CD4-positive, alpha-beta T cell (primary cell): ENCODE measurements at regions of chr19 and their contacts with region 1.

Region 1: GRCh38 chr19:51703575-51704515 is 10.7 kb downstream of the SPACA6 start:
- DNase-seq: peak; percentile 93 to 99 (median 97)
- ATAC-seq: peak; percentile 89
- H3K4me3 ChIP-seq: peak overlapping the region; percentile 91
- H3K4me3 Mint-ChIP-seq: peak overlapping the region; percentile 93
- H3K27ac ChIP-seq: peak overlapping the region; percentile 66 to 82
- H3K27ac Mint-ChIP-seq: peak overlapping the region; percentile 84
- H3K4me1 ChIP-seq: peaks cover 34% of the 10 kb centered on the region
- H3K4me1 Mint-ChIP-seq: peaks cover 46% of the 10 kb centered on the region
- H3K27me3 ChIP-seq: no peaks in the 10 kb centered on the region
- H3K27me3 Mint-ChIP-seq: no peaks in the 10 kb centered on the region
- CTCF ChIP-seq: peak; percentile 55

Region 2: DNA sequence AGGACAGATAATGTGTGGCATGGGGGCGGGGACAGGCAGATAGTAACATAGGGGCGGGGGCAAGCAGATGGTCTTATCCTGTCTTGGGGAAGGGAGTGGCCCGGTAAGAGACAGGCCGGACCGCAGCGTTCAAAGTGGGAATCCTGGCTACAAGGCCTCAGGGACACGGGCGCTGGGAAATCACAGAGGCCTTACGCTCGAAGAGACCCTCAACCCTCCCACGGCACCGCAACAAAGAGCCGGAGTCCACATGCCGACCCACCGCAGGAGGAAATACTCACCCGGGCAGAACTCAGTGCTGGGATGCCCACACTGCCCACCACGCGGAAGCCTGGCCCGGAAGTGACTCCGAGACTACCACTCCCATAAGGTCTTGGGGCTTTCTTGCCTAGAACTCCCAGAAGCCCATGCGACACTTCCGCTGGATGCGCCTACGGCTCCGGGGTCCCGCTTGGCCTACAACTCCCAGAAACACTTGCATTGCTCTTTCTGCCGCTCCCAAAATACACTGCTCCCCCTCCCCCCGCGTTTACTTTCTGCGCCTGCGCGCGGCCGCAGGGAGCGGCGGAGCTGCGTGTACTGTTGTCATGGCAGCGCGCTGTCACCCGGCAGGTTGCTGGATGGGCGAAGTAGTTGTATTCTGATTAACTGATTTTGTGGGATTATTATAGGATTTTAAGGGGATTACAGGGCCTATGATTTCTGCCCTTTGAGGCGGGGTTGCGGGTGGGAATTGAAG is 595.6 kb before region 1 on chr19 and contains the start of gene CTU1:
- CTCF ChIA-PET with region 1: no interaction called
- POLR2A ChIA-PET with region 1: no interaction called
- intact Hi-C with region 1: loop called in 1 of 2 experiments (anchors 10 kb)
- DNase-seq: peak; percentile 96 to 100 (median 98)
- ATAC-seq: peak; percentile 98
- H3K4me3 ChIP-seq: peak within 1 kb of the TSS; percentile 83
- H3K4me3 Mint-ChIP-seq: peak within 1 kb of the TSS; percentile 95
- H3K27ac ChIP-seq: peak within 1 kb of the TSS; percentile 60 to 63
- H3K27ac Mint-ChIP-seq: peak within 1 kb of the TSS; percentile 91
- H3K4me1 ChIP-seq: peaks cover 29% of the 10 kb centered on the region
- H3K4me1 Mint-ChIP-seq: peaks cover 38% of the 10 kb centered on the region
- H3K27me3 ChIP-seq: no peaks in the 10 kb centered on the region
- H3K27me3 Mint-ChIP-seq: no peaks in the 10 kb centered on the region
- CTCF ChIP-seq: no peak
- total RNA-seq, gene CTU1: 1.4 to 1.6 TPM

Region 3: GRCh38 chr19:51570962-51571575 is 132.8 kb before region 1 on chr19 and contains the start of gene ZNF175:
- CTCF ChIA-PET with region 1: interaction called, 3 read pairs
- POLR2A ChIA-PET with region 1: interaction called, 3 read pairs
- intact Hi-C with region 1: loop called in 1 of 2 experiments (anchors 5 kb)
- DNase-seq: peak; percentile 77 to 94 (median 83)
- ATAC-seq: peak; percentile 98
- H3K4me3 ChIP-seq: peak within 1 kb of the TSS; percentile 76
- H3K4me3 Mint-ChIP-seq: peak within 1 kb of the TSS; percentile 94
- H3K27ac ChIP-seq: no peak within 1 kb of the TSS
- H3K27ac Mint-ChIP-seq: peak within 1 kb of the TSS; percentile 72
- H3K4me1 ChIP-seq: peaks cover 16% of the 10 kb centered on the region
- H3K4me1 Mint-ChIP-seq: peaks cover 28% of the 10 kb centered on the region
- H3K27me3 ChIP-seq: peaks cover 0 to 2% of the 10 kb centered on the region in 2 experiments
- H3K27me3 Mint-ChIP-seq: peaks cover 7% of the 10 kb centered on the region
- CTCF ChIP-seq: no peak
- total RNA-seq, gene ZNF175: 1.1 to 1.9 TPM

Region 4: DNA sequence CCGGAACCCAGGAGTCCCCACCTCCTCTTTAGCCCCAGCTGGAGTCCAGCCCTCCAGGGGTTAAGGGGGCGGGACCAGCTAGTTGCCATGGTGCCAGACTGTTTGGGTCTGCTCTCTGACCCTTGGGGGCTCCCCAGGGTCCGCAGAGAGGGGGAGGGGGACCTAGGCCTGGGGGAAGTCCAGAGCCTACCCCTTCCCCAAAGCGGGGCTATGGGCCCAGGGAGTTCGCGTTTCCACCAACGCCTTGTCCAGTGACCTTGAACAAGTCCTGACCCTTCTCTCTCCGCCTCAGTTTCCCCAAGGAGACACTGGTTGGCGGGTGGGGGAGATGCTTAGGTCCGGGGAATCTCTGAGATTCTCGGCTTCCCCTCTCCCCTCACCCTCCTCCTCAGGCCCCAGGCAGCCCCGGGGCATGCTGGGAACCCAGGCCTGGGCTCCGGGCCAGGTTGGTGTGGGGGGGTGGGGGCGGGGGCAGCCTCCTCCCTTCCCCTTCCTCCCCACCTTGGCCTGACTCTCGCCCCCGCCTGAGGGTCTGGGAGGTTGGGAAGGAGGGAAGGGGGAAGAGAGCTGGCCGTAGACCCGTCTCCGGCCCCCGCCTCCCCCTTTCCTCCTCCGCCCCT is 13.3 kb before region 1 on chr19:
- CTCF ChIA-PET with region 1: interaction called, 4 read pairs
- POLR2A ChIA-PET with region 1: interaction called, 13 read pairs
- intact Hi-C with region 1: loop called in 1 of 2 experiments (anchors 1 kb)
- DNase-seq: peak; percentile 44 to 93 (median 66)
- ATAC-seq: peak; percentile 82
- H3K4me3 ChIP-seq: peak overlapping the region; percentile 75
- H3K4me3 Mint-ChIP-seq: peak overlapping the region; percentile 94
- H3K27ac ChIP-seq: peak overlapping the region; percentile 83 to 94
- H3K27ac Mint-ChIP-seq: peak overlapping the region; percentile 81
- H3K4me1 ChIP-seq: peaks cover 33% of the 10 kb centered on the region
- H3K4me1 Mint-ChIP-seq: peaks cover 18% of the 10 kb centered on the region
- H3K27me3 ChIP-seq: no peaks in the 10 kb centered on the region
- H3K27me3 Mint-ChIP-seq: no peaks in the 10 kb centered on the region
- CTCF ChIP-seq: no peak

Region 5: GRCh38 chr19:52189735-52190486 is 486.1 kb after region 1 on chr19 and contains the start of gene PPP2R1A:
- CTCF ChIA-PET with region 1: no interaction called
- POLR2A ChIA-PET with region 1: no interaction called
- intact Hi-C with region 1: loop called in 1 of 2 experiments (anchors 5 kb)
- DNase-seq: peak; percentile 95 to 100 (median 98)
- ATAC-seq: peak; percentile 81
- H3K4me3 ChIP-seq: peak within 1 kb of the TSS; percentile 81
- H3K4me3 Mint-ChIP-seq: peak within 1 kb of the TSS; percentile 95
- H3K27ac ChIP-seq: peak within 1 kb of the TSS; percentile 98
- H3K27ac Mint-ChIP-seq: peak within 1 kb of the TSS; percentile 96
- H3K4me1 ChIP-seq: peaks cover 56% of the 10 kb centered on the region
- H3K4me1 Mint-ChIP-seq: peaks cover 54% of the 10 kb centered on the region
- H3K27me3 ChIP-seq: no peaks in the 10 kb centered on the region
- H3K27me3 Mint-ChIP-seq: no peaks in the 10 kb centered on the region
- CTCF ChIP-seq: no peak
- total RNA-seq, gene PPP2R1A: 151 to 157 TPM